K562 (cell line): ENCODE measurements at regions of chr20 and their contacts with region 1.

Region 1: GRCh38 chr20:45362804-45363610 is at the start of gene SYS1:
- DNase-seq: peak; percentile 96 to 98 (median 96)
- ATAC-seq: peak; percentile 97
- H3K4me3 ChIP-seq: peak within 1 kb of the TSS; percentile 81
- H3K27ac ChIP-seq: peak within 1 kb of the TSS; percentile 98
- H3K4me1 ChIP-seq: peaks cover 11 to 24% of the 10 kb centered on the region in 2 experiments
- H3K27me3 ChIP-seq: no peaks in the 10 kb centered on the region
- CTCF ChIP-seq: peak; percentile 88 to 97 (median 96)
- EP300 ChIP-seq: no peak; the same call in 1 of the 2 replicates
- POLR2A ChIP-seq: peak; percentile 94
- RAD21 ChIP-seq: peak; percentile 80 to 81
- polyA plus RNA-seq, gene SYS1: 16.4 to 25.2 TPM

Region 2: DNA sequence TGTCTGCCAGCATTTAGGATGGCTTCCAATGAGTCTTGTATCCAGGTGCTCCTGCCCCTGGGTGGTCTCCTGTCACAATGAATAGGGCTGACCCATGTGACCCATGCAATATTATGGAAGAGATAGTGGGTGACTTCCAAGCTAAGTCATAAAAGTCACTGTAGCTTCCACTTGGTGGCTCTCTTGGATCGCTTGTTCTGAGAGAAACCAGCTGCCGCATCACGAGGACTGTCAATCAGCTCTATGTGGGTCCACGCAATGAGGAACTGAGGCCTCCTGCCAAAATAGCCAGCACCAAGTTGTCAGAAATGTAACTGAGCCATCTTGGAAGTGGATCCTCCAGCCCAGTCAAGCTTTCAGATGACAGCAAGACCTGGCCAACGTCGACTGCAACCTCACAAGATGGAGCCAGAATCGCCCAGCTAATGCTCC is 40.0 kb before region 1 on chr20:
- CTCF ChIA-PET with region 1: no interaction called
- POLR2A ChIA-PET with region 1: interaction called, 3 read pairs
- in situ Hi-C with region 1: loop called (anchors 5 kb)
- intact Hi-C with region 1: loop called (anchors 2 kb)
- DNase-seq: peak in 3 of 4 experiments; percentile 41 to 84 (median 73)
- ATAC-seq: peak; percentile 92
- H3K4me3 ChIP-seq: no peak overlapping the region
- H3K27ac ChIP-seq: no peak overlapping the region
- H3K4me1 ChIP-seq: peaks cover 4 to 9% of the 10 kb centered on the region in 2 experiments; a peak in 4 of 5 replicates
- H3K27me3 ChIP-seq: no peaks in the 10 kb centered on the region
- CTCF ChIP-seq: peak; percentile 78 to 94 (median 81)
- EP300 ChIP-seq: no peak
- POLR2A ChIP-seq: no peak
- RAD21 ChIP-seq: peak; percentile 95 to 97

Region 3: GRCh38 chr20:45347936-45348778 is 14.8 kb before region 1 on chr20 and contains the start of gene SDC4:
- CTCF ChIA-PET with region 1: no interaction called
- POLR2A ChIA-PET with region 1: interaction called, 16 read pairs
- in situ Hi-C with region 1: no loop called
- intact Hi-C with region 1: no loop called
- DNase-seq: peak; percentile 76 to 87 (median 86)
- ATAC-seq: peak; percentile 84
- H3K4me3 ChIP-seq: peak within 1 kb of the TSS; percentile 54
- H3K27ac ChIP-seq: peak within 1 kb of the TSS; percentile 67
- H3K4me1 ChIP-seq: peaks cover 27 to 41% of the 10 kb centered on the region in 2 experiments
- H3K27me3 ChIP-seq: no peaks in the 10 kb centered on the region
- CTCF ChIP-seq: no peak
- EP300 ChIP-seq: no peak
- POLR2A ChIP-seq: peak; percentile 95
- RAD21 ChIP-seq: no peak
- polyA plus RNA-seq, gene SDC4: 2.1 to 4.2 TPM

Region 4: GRCh38 chr20:45373353-45374100 is 10.5 kb after region 1 on chr20:
- CTCF ChIA-PET with region 1: no interaction called
- POLR2A ChIA-PET with region 1: interaction called, 38 read pairs
- in situ Hi-C with region 1: no loop called
- intact Hi-C with region 1: no loop called
- DNase-seq: peak; percentile 84 to 95 (median 88)
- ATAC-seq: peak; percentile 96
- H3K4me3 ChIP-seq: peak overlapping the region; percentile 41
- H3K27ac ChIP-seq: peak overlapping the region; percentile 74
- H3K4me1 ChIP-seq: peaks cover 7 to 15% of the 10 kb centered on the region in 2 experiments; a peak in 4 of 5 replicates
- H3K27me3 ChIP-seq: no peaks in the 10 kb centered on the region
- CTCF ChIP-seq: peak; percentile 95 to 97 (median 95)
- EP300 ChIP-seq: no peak; the same call in 1 of the 2 replicates
- POLR2A ChIP-seq: peak; percentile 64
- RAD21 ChIP-seq: peak; percentile 87 to 92

Region 5: DNA sequence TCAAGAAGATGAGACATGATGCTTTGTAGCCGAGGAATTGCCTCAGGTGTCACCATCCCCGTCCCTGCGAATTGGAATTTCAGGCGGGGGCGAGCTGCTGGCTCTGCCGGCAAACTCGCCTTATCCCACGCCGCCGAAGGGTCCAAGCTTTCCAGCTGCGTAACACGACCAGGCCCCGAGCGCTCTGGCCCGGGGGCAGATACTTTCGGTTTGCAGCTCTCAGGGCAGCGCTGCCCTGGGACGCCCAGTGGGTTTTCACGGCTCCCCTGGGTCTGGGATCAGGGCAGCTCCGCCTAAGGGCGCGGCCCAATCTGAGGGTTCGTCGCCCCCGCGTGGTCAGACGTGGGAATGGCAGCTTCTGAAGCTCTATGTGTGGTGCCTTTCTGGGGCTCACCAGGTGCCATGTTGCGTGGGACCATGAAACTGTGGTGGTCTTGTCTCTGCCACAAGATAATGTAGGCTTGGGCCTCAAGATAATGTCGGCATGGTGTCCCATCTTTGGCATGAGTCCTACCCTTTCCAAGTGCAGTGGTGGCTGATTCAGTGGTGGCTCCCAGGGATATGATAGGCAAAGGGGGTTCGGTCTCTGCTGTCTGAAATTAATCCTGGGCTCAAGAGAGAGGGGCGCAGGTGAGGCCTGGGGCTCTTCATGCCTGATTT is 73.9 kb after region 1 on chr20:
- CTCF ChIA-PET with region 1: interaction called, 12 read pairs
- POLR2A ChIA-PET with region 1: interaction called, 14 read pairs
- in situ Hi-C with region 1: no loop called
- intact Hi-C with region 1: loop called (anchors 2 kb)
- DNase-seq: peak; percentile 87 to 88 (median 88)
- ATAC-seq: peak; percentile 100
- H3K4me3 ChIP-seq: peak overlapping the region; percentile 38
- H3K27ac ChIP-seq: no peak overlapping the region
- H3K4me1 ChIP-seq: peaks cover 3 to 6% of the 10 kb centered on the region in 2 experiments; a peak in 2 of 5 replicates
- H3K27me3 ChIP-seq: no peaks in the 10 kb centered on the region
- CTCF ChIP-seq: peak; percentile 94 to 96 (median 95)
- EP300 ChIP-seq: 0 out of 2 replicates have a peak, but pooled peaks have one; percentile 14
- POLR2A ChIP-seq: no peak
- RAD21 ChIP-seq: peak; percentile 92 to 97

Region 6: DNA sequence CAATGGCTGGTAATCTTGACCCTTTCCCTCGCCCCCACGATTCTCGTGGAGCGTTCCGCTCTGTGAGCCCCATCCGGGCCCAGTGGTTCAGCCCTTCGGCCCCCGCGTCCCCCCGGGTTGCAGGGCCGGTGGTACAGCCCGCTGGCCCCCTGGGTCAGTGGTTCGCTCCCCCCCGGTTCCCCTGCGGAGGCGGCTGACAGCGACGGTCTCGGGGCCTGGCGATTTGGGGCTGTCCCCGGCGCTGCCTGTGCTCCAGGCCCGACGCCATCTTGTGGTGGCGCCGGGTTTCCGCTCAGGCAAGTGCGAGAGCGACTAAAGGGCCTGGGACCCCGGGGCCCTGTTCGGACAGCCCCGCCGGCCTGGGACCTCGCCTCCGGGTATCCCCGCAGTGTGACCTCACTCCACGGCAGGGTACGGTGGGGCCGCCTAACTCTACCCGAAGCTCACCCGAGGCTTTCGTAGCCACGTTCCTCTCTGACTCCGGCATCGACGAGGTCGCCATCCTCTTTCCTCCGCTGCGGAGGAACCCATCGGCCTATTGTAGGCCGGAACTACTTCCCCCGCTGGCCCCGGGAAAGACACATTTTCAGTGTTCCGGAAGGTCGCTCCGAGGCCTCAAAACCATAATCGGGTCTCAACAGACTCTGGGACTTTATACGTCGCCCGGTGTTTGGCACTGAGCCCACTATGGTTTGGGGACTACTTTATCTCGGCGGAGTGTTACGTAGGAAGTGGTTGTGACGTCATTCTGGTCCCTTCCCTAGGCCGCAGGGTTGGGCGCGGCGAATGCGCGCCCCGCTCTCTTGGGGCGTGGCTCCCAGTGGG is 608.9 kb after region 1 on chr20 and contains the start of gene ZNF335:
- CTCF ChIA-PET with region 1: no interaction called
- POLR2A ChIA-PET with region 1: no interaction called
- in situ Hi-C with region 1: no loop called
- intact Hi-C with region 1: loop called (anchors 10 kb)
- DNase-seq: peak; percentile 98 to 99 (median 99)
- ATAC-seq: peak; percentile 82
- H3K4me3 ChIP-seq: peak within 1 kb of the TSS; percentile 82
- H3K27ac ChIP-seq: peak within 1 kb of the TSS; percentile 100
- H3K4me1 ChIP-seq: peaks cover 9 to 36% of the 10 kb centered on the region in 2 experiments; a peak in 4 of 5 replicates
- H3K27me3 ChIP-seq: no peaks in the 10 kb centered on the region
- CTCF ChIP-seq: peak in 1 of 3 experiments; percentile 26; a peak in 2 of 6 replicates
- EP300 ChIP-seq: peak; percentile 12; the same call in 1 of the 2 replicates
- POLR2A ChIP-seq: peak; percentile 71; the same call in 1 of the 2 replicates
- RAD21 ChIP-seq: no peak; a peak in 1 of 4 replicates
- polyA plus RNA-seq, gene ZNF335: 0.39 to 0.50 TPM